ENCODE measurements at regions of chr12 and their contacts with region 1.

Region 1: DNA sequence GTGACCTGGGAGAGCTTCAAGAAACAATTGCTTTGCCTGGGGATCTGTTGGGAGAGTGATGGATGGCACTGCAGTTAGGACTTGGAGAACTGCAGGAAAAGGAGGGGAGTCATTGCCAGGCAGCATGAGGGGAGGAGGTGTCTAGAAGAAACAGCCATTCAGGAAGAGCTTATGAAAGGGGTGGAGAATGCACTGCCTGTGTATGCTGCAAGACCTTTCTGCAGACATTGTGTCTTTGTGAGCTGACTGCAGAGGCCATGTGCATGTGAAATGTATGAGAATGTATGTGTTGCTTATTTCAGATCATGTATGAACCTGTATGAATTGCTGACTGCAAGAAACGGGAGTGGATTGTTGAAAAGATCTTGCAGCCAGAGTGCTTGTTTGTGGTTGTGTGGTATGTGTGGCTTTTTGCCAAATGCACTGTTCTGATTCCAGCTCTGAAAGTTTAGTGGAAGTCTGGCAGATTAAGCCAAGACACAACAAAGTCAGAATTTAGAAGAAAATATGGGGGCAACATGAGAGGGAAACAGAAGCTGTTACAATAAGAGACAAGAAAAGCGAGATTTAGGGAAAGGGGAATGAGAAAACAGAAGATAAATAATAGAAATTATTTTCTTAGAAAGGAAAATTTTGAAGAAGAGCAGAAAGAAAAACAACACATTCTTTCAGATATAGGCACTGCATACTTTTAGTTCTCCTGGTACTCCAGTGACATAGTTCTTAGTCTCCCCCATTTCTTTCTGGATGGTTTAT is 9.8 kb upstream of the RIMKLB start:
- DNase-seq: peak; percentile 74
- H3K4me3 ChIP-seq: peak overlapping the region; percentile 31
- H3K27ac ChIP-seq: peak overlapping the region; percentile 52
- H3K4me1 ChIP-seq: peaks cover 69% of the 10 kb centered on the region
- CTCF ChIP-seq: no peak

Region 2: GRCh38 chr12:8622646-8623045 is 65.4 kb before region 1 on chr12:
- CTCF ChIA-PET with region 1: no interaction called
- POLR2A ChIA-PET with region 1: no interaction called
- intact Hi-C with region 1: no loop called
- DNase-seq: no peak
- H3K4me3 ChIP-seq: no peak overlapping the region
- H3K27ac ChIP-seq: no peak overlapping the region
- H3K4me1 ChIP-seq: peaks cover 7% of the 10 kb centered on the region
- CTCF ChIP-seq: no peak

Region 3: DNA sequence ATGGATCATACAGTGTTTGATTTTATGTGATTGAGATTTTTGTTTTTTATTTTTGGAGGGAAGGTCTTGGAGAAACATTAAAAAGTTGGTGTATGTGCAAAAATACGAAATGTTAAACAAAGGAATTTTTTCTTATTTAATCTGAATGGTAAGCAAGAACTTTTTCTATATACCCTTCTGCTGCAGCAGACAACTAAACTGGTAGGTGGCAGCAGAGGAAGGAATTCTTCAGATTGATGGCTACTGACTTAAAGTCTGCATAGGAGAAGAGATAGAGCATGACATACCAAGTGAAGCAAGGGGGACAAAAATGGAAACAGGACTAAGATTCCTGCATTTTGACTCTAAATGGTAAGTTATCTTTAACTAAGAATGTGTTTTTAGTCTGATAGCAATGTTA is 92.4 kb after region 1 on chr12:
- CTCF ChIA-PET with region 1: no interaction called
- POLR2A ChIA-PET with region 1: no interaction called
- intact Hi-C with region 1: loop called (anchors 2 kb)
- DNase-seq: peak; percentile 33
- H3K4me3 ChIP-seq: no peak overlapping the region
- H3K27ac ChIP-seq: no peak overlapping the region
- H3K4me1 ChIP-seq: no peaks in the 10 kb centered on the region
- CTCF ChIP-seq: peak; percentile 67